Activated CD8-positive, alpha-beta memory T cell treated with anti-CD3 and anti-CD28 coated beads, Interleukin-2, amount 10 ng/mL, durations not matched to agents 7 days and 5 days (primary cell): ENCODE measurements at regions of chr7 and their contacts with region 1.

Region 1: GRCh38 chr7:37352974-37353948 is 95.4 kb downstream of the ELMO1 start:
- DNase-seq: peak; percentile 79
- ATAC-seq: peak; percentile 84
- H3K4me3 Mint-ChIP-seq: peak overlapping the region; percentile 86
- H3K27ac Mint-ChIP-seq: peak overlapping the region; percentile 85
- H3K4me1 Mint-ChIP-seq: peaks cover 52% of the 10 kb centered on the region
- H3K27me3 Mint-ChIP-seq: no peaks in the 10 kb centered on the region

Region 2: GRCh38 chr7:37234928-37235327 is 118.3 kb before region 1 on chr7:
- CTCF ChIA-PET with region 1: interaction called, 20 read pairs
- DNase-seq: no peak
- ATAC-seq: no peak
- H3K4me3 Mint-ChIP-seq: no peak overlapping the region
- H3K27ac Mint-ChIP-seq: peak overlapping the region; percentile 2
- H3K4me1 Mint-ChIP-seq: peaks cover 3% of the 10 kb centered on the region
- H3K27me3 Mint-ChIP-seq: no peaks in the 10 kb centered on the region

Region 3: GRCh38 chr7:37284805-37285231 is 68.4 kb before region 1 on chr7:
- CTCF ChIA-PET with region 1: interaction called, 49 read pairs
- DNase-seq: peak; percentile 54
- ATAC-seq: peak; percentile 30
- H3K4me3 Mint-ChIP-seq: no peak overlapping the region
- H3K27ac Mint-ChIP-seq: no peak overlapping the region
- H3K4me1 Mint-ChIP-seq: peaks cover 29% of the 10 kb centered on the region
- H3K27me3 Mint-ChIP-seq: no peaks in the 10 kb centered on the region

Region 4: DNA sequence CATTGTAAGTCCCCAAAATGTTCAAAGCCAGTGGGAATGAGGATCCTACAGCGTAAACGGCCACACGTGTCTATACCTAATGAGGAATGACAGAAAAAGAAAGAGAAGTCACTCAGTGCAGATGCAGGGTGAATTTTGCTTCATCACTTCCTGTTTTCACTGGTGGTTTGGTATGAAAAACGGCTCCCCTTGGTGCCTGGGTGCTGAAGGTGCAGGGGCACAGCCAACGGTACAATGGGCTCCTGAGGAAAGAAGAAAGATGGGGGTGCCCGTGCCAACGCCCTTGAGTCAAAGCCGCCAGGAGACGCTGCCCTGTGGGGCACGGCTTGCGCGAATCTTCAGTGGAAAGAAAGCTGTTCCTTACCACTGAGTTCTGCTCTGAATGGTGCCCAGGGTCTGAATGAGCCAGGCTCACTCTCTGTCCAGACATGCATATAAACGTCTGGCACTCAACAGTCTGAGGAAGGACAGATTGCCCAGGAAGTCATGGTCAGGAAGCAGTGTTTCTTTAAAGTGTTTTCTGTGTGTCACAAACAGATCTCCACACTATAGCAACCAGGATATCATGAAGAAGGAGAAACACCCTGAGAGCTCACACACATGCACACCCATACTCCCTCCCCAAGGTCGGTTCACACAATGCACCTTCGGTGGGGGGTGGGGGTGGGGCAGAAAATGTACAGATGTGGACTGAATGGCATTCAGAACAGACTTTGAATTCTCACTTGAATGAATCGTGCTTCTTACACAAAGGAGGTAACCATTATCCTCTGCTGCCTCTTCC is 10.4 kb before region 1 on chr7:
- CTCF ChIA-PET with region 1: interaction called, 32 read pairs
- DNase-seq: peak; percentile 83
- ATAC-seq: peak; percentile 84
- H3K4me3 Mint-ChIP-seq: peak overlapping the region; percentile 89
- H3K27ac Mint-ChIP-seq: peak overlapping the region; percentile 98
- H3K4me1 Mint-ChIP-seq: peaks cover 51% of the 10 kb centered on the region
- H3K27me3 Mint-ChIP-seq: no peaks in the 10 kb centered on the region

Region 5: GRCh38 chr7:37376386-37376785 is 23.1 kb after region 1 on chr7:
- CTCF ChIA-PET with region 1: no interaction called
- DNase-seq: no peak
- ATAC-seq: no peak
- H3K4me3 Mint-ChIP-seq: no peak overlapping the region
- H3K27ac Mint-ChIP-seq: no peak overlapping the region
- H3K4me1 Mint-ChIP-seq: peaks cover 10% of the 10 kb centered on the region
- H3K27me3 Mint-ChIP-seq: peaks cover 2% of the 10 kb centered on the region

Region 6: GRCh38 chr7:37395618-37396259 is 42.5 kb after region 1 on chr7:
- CTCF ChIA-PET with region 1: no interaction called
- DNase-seq: no peak
- ATAC-seq: no peak
- H3K4me3 Mint-ChIP-seq: no peak overlapping the region
- H3K27ac Mint-ChIP-seq: peak overlapping the region; percentile 30
- H3K4me1 Mint-ChIP-seq: peaks cover 6% of the 10 kb centered on the region
- H3K27me3 Mint-ChIP-seq: no peaks in the 10 kb centered on the region

Region 7: GRCh38 chr7:37448636-37449361 is 95.5 kb after region 1 on chr7 and contains the start of gene ELMO1:
- CTCF ChIA-PET with region 1: interaction called, 21 read pairs
- DNase-seq: peak; percentile 88
- ATAC-seq: peak; percentile 94
- H3K4me3 Mint-ChIP-seq: peak within 1 kb of the TSS; percentile 88
- H3K27ac Mint-ChIP-seq: peak within 1 kb of the TSS; percentile 93
- H3K4me1 Mint-ChIP-seq: peaks cover 36% of the 10 kb centered on the region
- H3K27me3 Mint-ChIP-seq: peaks cover 11% of the 10 kb centered on the region
- total RNA-seq, gene ELMO1: 101 TPM